ENCODE measurements at regions of chr9 and their contacts with region 1.

Region 1: GRCh38 chr9:32384364-32385151 is at the start of gene ACO1:
- DNase-seq: peak; percentile 84 to 91 (median 89)
- H3K4me3 ChIP-seq: peak within 1 kb of the TSS; percentile 82
- H3K4me3 Mint-ChIP-seq: peak within 1 kb of the TSS; percentile 85 to 90 (median 87)
- H3K27ac ChIP-seq: peak within 1 kb of the TSS; percentile 28
- H3K27ac Mint-ChIP-seq: peak within 1 kb of the TSS; percentile 4 to 93 (median 61)
- H3K4me1 ChIP-seq: peaks cover 10% of the 10 kb centered on the region
- H3K4me1 Mint-ChIP-seq: peaks cover 20 to 36% (median 26%) of the 10 kb centered on the region in 3 donors
- H3K27me3 ChIP-seq: no peaks in the 10 kb centered on the region
- H3K27me3 Mint-ChIP-seq: peaks cover 4 to 28% of the 10 kb centered on the region in 2 donors
- total RNA-seq, gene ACO1: 13.5 to 13.6 TPM

Region 2: GRCh38 chr9:32431940-32432555 is 47.5 kb after region 1 on chr9:
- CTCF ChIA-PET with region 1: interaction called, 56 read pairs
- POLR2A ChIA-PET with region 1: no interaction called
- DNase-seq: peak; percentile 4 to 64 (median 14)
- H3K4me3 ChIP-seq: no peak overlapping the region
- H3K4me3 Mint-ChIP-seq: no peak overlapping the region
- H3K27ac ChIP-seq: no peak overlapping the region
- H3K27ac Mint-ChIP-seq: peak overlapping the region in 3 of 8 donors; percentile 61 to 91 (median 71)
- H3K4me1 ChIP-seq: no peaks in the 10 kb centered on the region
- H3K4me1 Mint-ChIP-seq: no peaks in the 10 kb centered on the region
- H3K27me3 ChIP-seq: no peaks in the 10 kb centered on the region
- H3K27me3 Mint-ChIP-seq: no peaks in the 10 kb centered on the region

Region 3: GRCh38 chr9:32526041-32526706 is 141.6 kb after region 1 on chr9 and contains the start of gene RIGI:
- CTCF ChIA-PET with region 1: interaction called, 36 read pairs
- POLR2A ChIA-PET with region 1: interaction called, 3 read pairs
- DNase-seq: peak; percentile 79 to 89 (median 83)
- H3K4me3 ChIP-seq: peak within 1 kb of the TSS; percentile 90
- H3K4me3 Mint-ChIP-seq: peak within 1 kb of the TSS; percentile 86 to 98 (median 98)
- H3K27ac ChIP-seq: peak within 1 kb of the TSS; percentile 71
- H3K27ac Mint-ChIP-seq: peak within 1 kb of the TSS; percentile 78 to 99 (median 96)
- H3K4me1 ChIP-seq: peaks cover 28% of the 10 kb centered on the region
- H3K4me1 Mint-ChIP-seq: peaks cover 52 to 57% (median 54%) of the 10 kb centered on the region in 3 donors
- H3K27me3 ChIP-seq: no peaks in the 10 kb centered on the region
- H3K27me3 Mint-ChIP-seq: no peaks in the 10 kb centered on the region
- total RNA-seq, gene RIGI: 5.9 to 6.5 TPM

Region 4: GRCh38 chr9:32550562-32551433 is 166.2 kb after region 1 on chr9:
- CTCF ChIA-PET with region 1: interaction called, 49 read pairs
- POLR2A ChIA-PET with region 1: interaction called, 14 read pairs
- DNase-seq: peak; percentile 95 to 98 (median 96)
- H3K4me3 ChIP-seq: peak overlapping the region; percentile 83
- H3K4me3 Mint-ChIP-seq: peak overlapping the region; percentile 90 to 98 (median 93)
- H3K27ac ChIP-seq: peak overlapping the region; percentile 89
- H3K27ac Mint-ChIP-seq: peak overlapping the region; percentile 96 to 99 (median 98)
- H3K4me1 ChIP-seq: peaks cover 34% of the 10 kb centered on the region
- H3K4me1 Mint-ChIP-seq: peaks cover 53 to 82% (median 60%) of the 10 kb centered on the region in 3 donors
- H3K27me3 ChIP-seq: no peaks in the 10 kb centered on the region
- H3K27me3 Mint-ChIP-seq: no peaks in the 10 kb centered on the region

Region 5: DNA sequence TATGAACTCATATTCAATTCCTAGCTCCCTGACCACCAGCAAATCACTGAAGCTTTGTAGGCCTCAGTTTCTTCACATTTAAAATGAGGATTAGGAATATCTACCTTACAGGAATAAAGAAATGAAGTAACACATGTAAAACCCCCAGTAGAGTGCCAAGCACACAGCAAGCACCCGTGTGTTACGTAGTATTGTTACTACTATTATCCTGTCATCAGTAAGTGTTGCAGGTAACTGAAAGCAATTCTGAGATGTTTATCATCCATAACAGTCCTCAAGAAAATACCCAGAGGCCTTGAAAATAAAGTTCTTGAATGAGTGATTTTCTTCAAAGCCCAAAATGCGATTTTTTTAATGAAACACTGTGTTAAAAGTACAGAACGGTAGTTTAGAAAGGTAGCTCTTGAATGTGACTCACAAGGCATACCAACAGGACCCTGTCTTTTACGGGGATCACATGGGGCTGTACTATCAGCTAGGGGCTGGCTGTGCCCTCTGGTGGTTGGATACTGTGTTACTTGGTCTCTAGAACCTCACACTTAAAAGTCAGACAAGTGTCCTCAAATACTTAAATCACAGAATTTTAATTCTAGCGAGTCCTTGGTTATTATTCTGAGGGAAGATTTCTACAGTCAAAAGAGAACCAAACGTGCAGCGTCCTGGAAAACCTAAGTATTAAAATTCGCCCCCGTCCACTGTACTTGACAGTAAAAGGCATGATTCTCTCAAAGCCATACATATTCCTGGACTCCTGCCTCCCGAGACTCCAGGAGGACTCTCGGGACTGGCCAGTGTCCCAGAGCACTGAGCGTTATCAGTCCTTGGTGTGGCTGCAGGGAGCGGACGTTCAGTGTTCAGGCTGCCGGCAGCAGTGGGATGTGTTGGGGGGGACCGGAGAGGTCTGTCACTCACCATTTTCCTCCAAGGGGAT is 187.7 kb after region 1 on chr9:
- CTCF ChIA-PET with region 1: interaction called, 342 read pairs
- POLR2A ChIA-PET with region 1: interaction called, 10 read pairs
- DNase-seq: peak; percentile 56 to 86 (median 73)
- H3K4me3 ChIP-seq: peak overlapping the region; percentile 98
- H3K4me3 Mint-ChIP-seq: peak overlapping the region; percentile 98 to 100 (median 99)
- H3K27ac ChIP-seq: peak overlapping the region; percentile 92
- H3K27ac Mint-ChIP-seq: peak overlapping the region; percentile 96 to 99 (median 99)
- H3K4me1 ChIP-seq: peaks cover 21% of the 10 kb centered on the region
- H3K4me1 Mint-ChIP-seq: peaks cover 33 to 40% (median 35%) of the 10 kb centered on the region in 3 donors
- H3K27me3 ChIP-seq: no peaks in the 10 kb centered on the region
- H3K27me3 Mint-ChIP-seq: peaks cover 0 to 3% of the 10 kb centered on the region in 2 donors

Region 6: DNA sequence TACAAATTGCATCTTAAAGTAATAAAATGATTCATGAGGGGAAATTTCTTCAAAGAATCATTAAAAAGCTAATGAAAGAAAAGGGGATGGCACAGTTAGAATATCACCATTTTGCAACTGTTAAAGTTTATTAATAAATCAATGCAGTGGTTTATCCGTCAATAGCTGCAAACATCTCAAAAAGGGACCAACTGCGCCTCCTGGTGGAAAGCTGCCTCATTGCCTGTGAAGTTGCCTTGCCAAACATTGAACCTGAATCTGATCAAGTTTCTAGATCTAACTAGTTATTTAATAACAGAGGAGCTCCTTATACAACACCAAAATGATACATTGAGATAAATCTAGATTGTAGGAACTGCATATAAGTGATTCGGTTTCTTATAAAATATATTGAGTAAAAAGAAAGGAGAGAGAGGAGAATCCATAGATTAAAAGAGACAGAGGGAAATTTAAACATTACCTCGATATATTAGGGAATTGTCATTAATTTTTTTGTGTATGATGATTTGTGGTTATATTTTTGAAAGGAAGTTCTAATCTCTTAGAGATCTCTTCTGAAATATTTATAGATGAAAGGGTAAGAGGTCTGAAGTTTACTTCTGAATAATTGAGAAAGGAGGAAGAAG is 195.3 kb after region 1 on chr9:
- CTCF ChIA-PET with region 1: interaction called, 342 read pairs
- POLR2A ChIA-PET with region 1: no interaction called
- DNase-seq: peak; percentile 61 to 84 (median 74)
- H3K4me3 ChIP-seq: no peak overlapping the region
- H3K4me3 Mint-ChIP-seq: no peak overlapping the region
- H3K27ac ChIP-seq: no peak overlapping the region
- H3K27ac Mint-ChIP-seq: peak overlapping the region in 1 of 8 donors; percentile 25
- H3K4me1 ChIP-seq: no peaks in the 10 kb centered on the region
- H3K4me1 Mint-ChIP-seq: peaks cover 0 to 2% (median 0%) of the 10 kb centered on the region in 3 donors
- H3K27me3 ChIP-seq: peaks cover 3% of the 10 kb centered on the region
- H3K27me3 Mint-ChIP-seq: peaks cover 9 to 22% of the 10 kb centered on the region in 2 donors

Measured in CD8-positive, alpha-beta memory T cell (primary cell).